ENCODE measurements at regions of chr17 and their contacts with region 1.

Region 1: DNA sequence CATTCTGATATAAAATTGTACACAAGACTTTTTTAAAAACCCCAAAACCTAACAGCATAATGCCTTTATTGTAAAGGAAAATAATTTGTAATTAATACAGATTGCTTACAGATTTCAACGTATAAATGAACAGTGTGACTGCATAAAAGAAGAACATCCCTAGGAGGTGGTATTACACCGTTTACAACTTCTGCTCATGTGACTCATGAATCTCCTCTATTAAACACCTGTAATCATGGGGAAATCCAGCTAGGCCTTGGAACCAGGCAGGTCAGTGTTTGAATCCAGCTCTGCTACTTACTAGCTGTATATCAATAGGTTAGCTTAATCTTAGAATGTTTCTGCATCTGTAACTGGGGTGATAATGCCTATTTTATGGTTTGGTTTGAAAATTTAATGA is 15.2 kb downstream of the RABEP1 start:
- DNase-seq: no peak
- CTCF ChIP-seq: no peak

Region 2: DNA sequence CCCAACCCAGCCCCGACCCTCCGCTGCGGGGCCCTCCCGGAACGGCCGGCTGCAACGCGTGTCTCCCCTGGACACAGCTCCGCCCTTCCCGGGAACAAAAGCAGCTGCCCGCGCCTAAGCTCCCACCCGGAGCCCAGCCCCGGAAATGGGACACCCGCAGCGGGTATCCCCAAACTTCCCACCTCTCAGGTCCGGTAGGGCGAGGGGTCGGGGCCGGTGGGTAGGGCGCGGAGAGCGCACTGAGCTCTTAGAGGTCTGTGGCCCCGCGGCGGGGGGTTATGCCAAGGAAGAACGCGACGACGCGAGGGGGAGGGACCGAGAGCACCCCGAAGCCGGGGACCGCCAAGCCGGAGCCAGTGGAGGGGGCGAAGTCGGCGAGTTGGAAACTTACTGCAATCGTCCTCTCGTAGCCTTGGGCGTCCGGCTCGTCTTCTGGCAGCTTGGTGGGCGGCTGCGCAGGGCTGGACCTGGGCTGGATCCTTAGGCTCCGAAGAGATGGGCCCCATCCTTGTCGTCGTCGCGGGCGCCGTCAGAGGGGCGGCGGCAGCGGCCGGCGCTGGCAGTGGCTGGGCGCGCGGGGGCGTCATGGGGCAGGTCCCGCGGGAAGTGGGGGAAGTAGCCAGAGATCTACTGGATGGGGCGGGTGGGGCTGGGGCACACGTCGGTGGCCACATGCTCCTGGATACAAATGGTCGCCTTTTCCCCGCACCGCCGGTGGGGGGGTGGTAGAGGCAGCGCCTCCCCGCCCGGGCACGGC is 174.5 kb before region 1 on chr17:
- CTCF ChIA-PET with region 1: no interaction called
- POLR2A ChIA-PET with region 1: no interaction called
- DNase-seq: no peak
- CTCF ChIP-seq: no peak

Region 3: DNA sequence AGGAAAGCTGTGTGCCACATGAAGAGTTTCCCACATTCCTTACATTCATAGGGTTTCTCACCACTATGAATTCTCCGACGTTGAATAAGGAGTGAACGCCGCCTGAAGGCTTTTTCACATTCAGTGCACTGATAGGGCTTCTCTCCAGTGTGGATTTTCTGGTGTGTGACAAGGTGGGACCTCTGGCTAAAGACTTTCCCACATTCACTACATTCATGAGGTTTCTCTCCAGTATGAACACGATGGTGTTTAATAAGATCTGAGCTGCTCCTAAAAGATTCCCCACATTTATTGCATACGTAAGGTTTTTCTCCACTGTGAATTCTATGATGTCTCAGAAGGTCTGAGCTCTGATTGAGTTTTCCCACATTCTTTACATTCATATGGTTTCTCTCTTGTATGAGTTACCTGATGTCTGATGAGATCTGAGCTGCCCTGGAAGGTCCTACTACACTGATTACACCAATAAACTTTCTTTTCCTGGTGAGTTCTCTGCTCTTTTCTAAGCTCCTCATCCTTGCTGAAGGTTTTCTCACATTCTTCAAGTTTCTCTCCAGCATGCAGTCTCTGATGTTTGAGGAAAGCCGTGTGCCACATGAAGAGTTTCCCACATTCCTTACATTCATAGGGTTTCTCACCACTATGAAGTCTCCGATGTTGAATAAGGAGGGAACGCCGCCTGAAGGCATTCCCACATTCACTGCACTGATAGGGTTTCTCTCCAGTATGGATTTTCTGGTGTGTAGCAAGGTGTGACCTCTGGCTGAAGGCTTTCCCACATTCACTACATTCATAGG is 115.5 kb before region 1 on chr17:
- CTCF ChIA-PET with region 1: no interaction called
- POLR2A ChIA-PET with region 1: no interaction called
- DNase-seq: no peak
- CTCF ChIP-seq: no peak

Region 4: GRCh38 chr17:5249615-5250014 is 47.6 kb before region 1 on chr17:
- CTCF ChIA-PET with region 1: interaction called, 10 read pairs
- POLR2A ChIA-PET with region 1: no interaction called
- DNase-seq: peak; percentile 77
- CTCF ChIP-seq: peak; percentile 66

Region 5: GRCh38 chr17:5683241-5683640 is 386.0 kb after region 1 on chr17:
- CTCF ChIA-PET with region 1: no interaction called
- POLR2A ChIA-PET with region 1: no interaction called
- DNase-seq: no peak
- CTCF ChIP-seq: no peak

Region 6: GRCh38 chr17:6104956-6105648 is 807.9 kb after region 1 on chr17:
- CTCF ChIA-PET with region 1: no interaction called
- POLR2A ChIA-PET with region 1: no interaction called
- DNase-seq: no peak
- CTCF ChIP-seq: no peak

Measured in GM10248 (cell line).